ENCODE measurements at regions of chr1 and their contacts with region 1.

Region 1: GRCh38 chr1:172443626-172444453 is at the start of gene PIGC:
- DNase-seq: peak; percentile 99
- ATAC-seq: peak; percentile 76
- H3K4me3 ChIP-seq: peak within 1 kb of the TSS; percentile 75
- H3K27ac ChIP-seq: peak within 1 kb of the TSS; percentile 69
- H3K4me1 ChIP-seq: peaks cover 47% of the 10 kb centered on the region
- H3K27me3 ChIP-seq: no peaks in the 10 kb centered on the region
- CTCF ChIP-seq: peak; percentile 100
- total RNA-seq, gene PIGC: 57.5 and 70.5 TPM in 2 replicates

Region 2: GRCh38 chr1:172185211-172185610 is 258.6 kb before region 1 on chr1:
- CTCF ChIA-PET with region 1: no interaction called
- POLR2A ChIA-PET with region 1: no interaction called
- intact Hi-C with region 1: no loop called
- DNase-seq: no peak
- ATAC-seq: no peak
- H3K4me3 ChIP-seq: no peak overlapping the region
- H3K27ac ChIP-seq: no peak overlapping the region
- H3K4me1 ChIP-seq: peaks cover 8% of the 10 kb centered on the region
- H3K27me3 ChIP-seq: no peaks in the 10 kb centered on the region
- CTCF ChIP-seq: no peak

Region 3: GRCh38 chr1:172630056-172630818 is 186.4 kb after region 1 on chr1:
- CTCF ChIA-PET with region 1: interaction called, 14 read pairs
- POLR2A ChIA-PET with region 1: no interaction called
- intact Hi-C with region 1: no loop called
- DNase-seq: peak; percentile 73
- ATAC-seq: peak; percentile 69
- H3K4me3 ChIP-seq: no peak overlapping the region
- H3K27ac ChIP-seq: peak overlapping the region; percentile 21
- H3K4me1 ChIP-seq: peaks cover 21% of the 10 kb centered on the region
- H3K27me3 ChIP-seq: no peaks in the 10 kb centered on the region
- CTCF ChIP-seq: no peak

Measured in PC-3 (cell line).